GM10248 (cell line): ENCODE measurements at regions of chr12 and their contacts with region 1.

Region 1: GRCh38 chr12:108691175-108691997 is 39.9 kb downstream of the CORO1C start:
- DNase-seq: peak; percentile 57
- CTCF ChIP-seq: peak; percentile 11

Region 2: DNA sequence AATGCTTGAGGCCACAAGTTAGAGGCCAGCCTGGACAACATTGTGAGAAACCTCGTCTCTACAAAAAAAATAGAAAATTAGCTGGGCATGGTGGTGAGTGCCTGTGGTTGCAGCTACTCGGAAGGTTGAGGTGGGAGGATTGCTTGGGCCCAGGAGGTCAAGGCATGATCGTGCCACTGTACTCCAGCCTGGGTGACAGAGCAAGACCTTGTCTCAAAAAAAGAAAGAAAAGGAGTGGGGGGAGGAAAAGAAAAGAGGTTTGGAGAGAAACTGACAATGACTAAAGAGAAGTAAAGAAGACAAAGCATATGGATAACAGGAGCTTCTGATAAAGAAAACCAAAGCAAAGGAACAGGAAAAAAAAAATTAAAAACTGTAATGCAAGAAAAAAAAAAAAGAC is 20.3 kb before region 1 on chr12:
- CTCF ChIA-PET with region 1: interaction called, 145 read pairs
- POLR2A ChIA-PET with region 1: interaction called, 3 read pairs
- DNase-seq: no peak
- CTCF ChIP-seq: no peak

Region 3: DNA sequence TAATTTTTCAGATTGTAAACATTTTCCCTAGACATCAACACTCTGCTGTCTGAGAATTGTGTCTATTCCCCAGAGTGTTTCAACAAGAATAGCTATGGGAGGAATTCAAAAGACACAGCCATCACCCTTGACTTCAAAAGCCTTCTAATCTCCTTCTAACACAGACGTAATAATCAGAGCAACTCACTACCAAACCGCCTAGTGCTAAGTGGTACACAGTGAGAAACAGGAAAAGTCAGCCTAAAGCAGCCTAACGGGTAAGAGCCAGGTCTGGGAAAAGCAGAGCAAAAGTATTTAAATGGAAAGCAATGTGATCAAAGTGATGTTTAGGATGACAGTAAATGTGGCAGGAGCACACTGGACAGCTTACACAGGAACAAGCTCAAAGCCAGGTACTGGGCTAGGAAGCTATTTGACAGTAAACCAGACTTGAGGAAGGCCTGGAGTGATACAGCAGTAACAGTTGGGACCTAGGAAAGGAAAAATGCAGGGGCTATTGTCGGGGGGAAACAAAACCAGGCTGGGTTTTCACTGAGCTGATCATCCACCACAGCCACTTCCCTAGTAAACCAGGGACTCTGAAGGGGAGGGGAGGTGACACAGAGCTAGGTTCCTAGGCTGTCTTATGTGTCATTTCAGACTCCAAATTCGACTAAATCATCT is 10.5 kb after region 1 on chr12:
- CTCF ChIA-PET with region 1: interaction called, 27 read pairs
- POLR2A ChIA-PET with region 1: no interaction called
- DNase-seq: no peak
- CTCF ChIP-seq: no peak